Panc1 (cell line): ENCODE measurements at regions of chr12 and their contacts with region 1.

Region 1: DNA sequence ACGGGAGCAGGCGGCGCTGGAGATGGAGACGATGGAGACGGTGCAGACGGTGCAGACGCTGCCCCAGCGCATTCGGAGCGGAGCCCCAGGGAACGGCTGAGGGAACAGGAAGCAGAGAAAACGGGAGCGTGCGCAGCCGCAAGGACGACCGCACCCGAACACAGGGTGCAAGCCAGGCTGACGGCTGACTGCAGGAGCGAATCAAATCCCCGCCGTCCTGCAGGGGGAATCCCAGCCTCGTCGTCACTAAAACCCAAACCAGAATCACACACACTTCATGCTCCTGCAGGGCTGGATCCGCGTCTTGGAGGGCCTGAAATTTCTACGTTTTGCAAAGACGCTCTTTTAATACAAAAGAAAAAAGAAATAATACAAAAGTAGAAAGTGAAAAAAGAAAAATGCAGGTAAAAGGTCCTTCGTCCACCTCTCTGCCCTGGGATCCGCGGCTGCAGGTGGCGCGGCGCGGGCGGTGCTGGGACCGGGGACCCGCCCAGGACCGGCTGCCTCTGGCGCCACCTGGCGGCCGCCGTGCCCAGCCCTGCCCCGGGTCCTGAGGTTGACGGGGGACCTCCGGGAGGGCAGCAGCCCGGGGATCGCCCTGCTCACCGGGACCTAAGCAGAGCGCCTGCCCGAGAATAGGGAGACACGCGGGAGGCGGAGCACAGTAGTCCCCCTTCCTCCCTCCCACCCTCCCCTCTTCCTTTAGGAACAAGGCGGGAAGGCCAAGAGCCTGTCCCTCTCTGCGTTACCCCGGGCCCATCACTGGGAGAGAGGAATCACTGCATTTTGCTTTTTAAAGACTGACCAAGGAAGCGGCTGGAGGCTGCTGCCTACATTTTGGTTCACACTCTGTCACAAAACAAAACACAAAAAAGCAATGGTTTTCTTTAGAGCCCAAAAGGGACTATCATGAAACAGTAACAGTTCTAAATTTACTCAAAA is 20.1 kb downstream of the STX2 start:
- DNase-seq: no peak
- ATAC-seq: peak; percentile 99
- H3K4me3 ChIP-seq: peak overlapping the region in 1 of 2 experiments; percentile 6; a peak in 1 of 4 replicates
- H3K27ac ChIP-seq: no peak overlapping the region
- H3K4me1 ChIP-seq: no peaks in the 10 kb centered on the region
- H3K27me3 ChIP-seq: no peaks in the 10 kb centered on the region
- CTCF ChIP-seq: peak; percentile 99

Region 2: GRCh38 chr12:130401703-130402102 is 417.2 kb before region 1 on chr12:
- CTCF ChIA-PET with region 1: no interaction called
- POLR2A ChIA-PET with region 1: no interaction called
- in situ Hi-C with region 1: no loop called
- intact Hi-C with region 1: loop called (anchors 5 kb)
- DNase-seq: no peak
- ATAC-seq: peak; percentile 85
- H3K4me3 ChIP-seq: no peak overlapping the region
- H3K27ac ChIP-seq: no peak overlapping the region
- H3K4me1 ChIP-seq: no peaks in the 10 kb centered on the region
- H3K27me3 ChIP-seq: no peaks in the 10 kb centered on the region; the same call in 1 of the 2 replicates
- CTCF ChIP-seq: peak; percentile 55

Region 3: DNA sequence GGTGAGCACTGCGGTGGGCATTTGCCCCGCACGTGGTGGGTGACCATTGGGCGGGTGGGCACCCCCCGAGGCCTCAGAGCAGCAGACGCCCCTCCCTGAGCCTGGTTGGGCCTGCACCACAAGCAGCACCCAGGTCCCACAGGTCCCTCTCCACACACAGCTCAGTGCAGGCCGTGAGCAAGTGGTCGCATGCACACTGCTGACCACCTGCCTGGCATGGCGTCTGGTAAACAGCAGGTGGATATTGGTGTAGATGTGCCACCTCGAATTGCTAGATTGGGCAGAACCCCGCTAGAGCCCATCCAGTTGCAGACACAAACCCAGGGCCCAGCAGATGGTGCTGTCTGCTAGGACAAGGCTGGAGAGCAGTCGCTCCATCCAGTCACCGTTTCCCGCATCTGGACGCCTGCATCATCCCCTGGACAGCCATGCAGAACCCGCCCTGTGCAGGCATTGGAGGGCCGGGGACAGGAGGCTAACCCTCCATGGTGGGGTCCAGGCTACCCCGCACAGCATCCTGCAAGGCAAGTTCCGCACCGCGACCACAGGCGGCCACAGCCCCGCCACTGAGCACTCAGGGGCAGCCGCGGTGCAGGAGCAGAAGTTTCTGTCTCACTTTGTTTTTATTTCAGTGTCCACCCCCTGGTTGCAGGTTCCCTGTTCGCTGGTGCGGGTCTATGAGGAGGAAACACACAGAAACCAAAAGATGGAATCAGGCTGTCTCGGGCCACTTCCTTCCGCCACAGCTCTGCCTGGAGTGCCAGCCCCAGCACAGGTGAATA is 57.2 kb before region 1 on chr12:
- CTCF ChIA-PET with region 1: no interaction called
- POLR2A ChIA-PET with region 1: interaction called, 5 read pairs
- in situ Hi-C with region 1: no loop called
- intact Hi-C with region 1: loop called (anchors 2 kb)
- DNase-seq: no peak
- ATAC-seq: peak; percentile 89
- H3K4me3 ChIP-seq: no peak overlapping the region
- H3K27ac ChIP-seq: no peak overlapping the region
- H3K4me1 ChIP-seq: no peaks in the 10 kb centered on the region
- H3K27me3 ChIP-seq: no peaks in the 10 kb centered on the region
- CTCF ChIP-seq: peak; percentile 83